ENCODE measurements at regions of chr5 and their contacts with region 1.

Region 1: GRCh38 chr5:150357326-150358260 is at the start of gene TCOF1:
- DNase-seq: peak; percentile 98 to 99 (median 98)
- ATAC-seq: peak; percentile 98 to 99 (median 98)
- H3K4me3 ChIP-seq: peak within 1 kb of the TSS; percentile 79 to 99 (median 95)
- H3K27ac ChIP-seq: peak within 1 kb of the TSS in 2 of 3 donors; percentile 31 to 49
- H3K4me1 ChIP-seq: peaks cover 0 to 18% (median 2%) of the 10 kb centered on the region in 4 donors
- H3K27me3 ChIP-seq: no peaks in the 10 kb centered on the region
- CTCF ChIP-seq: no peak
- POLR2A ChIP-seq: peak; percentile 38
- total RNA-seq, gene TCOF1: 6.7 to 12.0 (median 8.9) TPM

Region 2: DNA sequence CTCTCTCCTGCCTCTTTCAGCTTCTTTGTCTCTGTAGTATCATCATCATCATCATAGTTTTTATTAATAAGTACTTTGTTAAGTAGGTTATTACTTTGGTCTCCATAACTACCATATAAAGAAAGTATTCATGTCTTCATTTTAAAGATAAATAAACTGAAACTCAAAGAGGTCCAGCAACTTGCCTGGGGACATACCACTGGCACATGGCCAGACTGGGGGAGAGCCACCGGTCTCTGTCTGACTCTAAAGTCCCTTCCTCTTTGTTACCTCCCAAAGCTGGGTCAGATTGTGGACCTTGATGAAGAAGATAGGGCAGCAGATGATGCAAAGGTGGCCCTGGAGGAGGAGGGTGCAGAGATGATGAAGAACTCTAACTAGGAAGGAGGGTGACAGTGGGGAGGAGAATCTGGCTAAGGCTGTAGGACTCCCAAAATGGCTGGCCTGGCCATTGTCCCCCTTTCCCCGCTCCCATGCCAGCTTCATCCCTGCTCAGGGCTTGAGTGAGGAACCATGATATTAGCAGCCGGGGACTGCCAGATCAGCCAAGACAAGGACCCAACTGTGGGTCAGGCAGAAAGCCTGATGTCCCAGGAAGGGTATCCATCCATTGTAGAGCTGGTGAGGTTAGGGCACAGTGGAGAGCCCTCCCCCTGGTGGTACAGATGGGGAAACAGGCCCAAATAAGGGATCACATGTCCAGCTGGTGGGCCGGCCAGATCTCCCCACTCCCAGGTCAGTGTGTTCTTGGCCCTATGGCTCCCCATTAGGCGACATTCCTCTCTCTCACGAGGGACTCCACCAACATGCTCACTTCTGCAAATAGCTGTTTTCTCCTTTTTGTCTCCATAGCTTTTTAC is 182.3 kb before region 1 on chr5:
- intact Hi-C with region 1: no loop called
- DNase-seq: no peak
- ATAC-seq: peak; percentile 64 to 72 (median 68)
- H3K4me3 ChIP-seq: no peak overlapping the region
- H3K27ac ChIP-seq: no peak overlapping the region
- H3K4me1 ChIP-seq: no peaks in the 10 kb centered on the region
- H3K27me3 ChIP-seq: no peaks in the 10 kb centered on the region
- CTCF ChIP-seq: peak in 3 of 4 donors; percentile 39 to 48 (median 41)
- POLR2A ChIP-seq: no peak

Region 3: GRCh38 chr5:150258130-150258529 is 99.5 kb before region 1 on chr5:
- intact Hi-C with region 1: loop called in 1 of 2 experiments (anchors 10 kb)
- DNase-seq: no peak
- ATAC-seq: no peak
- H3K4me3 ChIP-seq: no peak overlapping the region
- H3K27ac ChIP-seq: no peak overlapping the region
- H3K4me1 ChIP-seq: no peaks in the 10 kb centered on the region
- H3K27me3 ChIP-seq: no peaks in the 10 kb centered on the region
- CTCF ChIP-seq: no peak
- POLR2A ChIP-seq: no peak

Measured in right lobe of liver (tissue), 6 donors.